ENCODE measurements at regions of chr2 and their contacts with region 1.

Region 1: DNA sequence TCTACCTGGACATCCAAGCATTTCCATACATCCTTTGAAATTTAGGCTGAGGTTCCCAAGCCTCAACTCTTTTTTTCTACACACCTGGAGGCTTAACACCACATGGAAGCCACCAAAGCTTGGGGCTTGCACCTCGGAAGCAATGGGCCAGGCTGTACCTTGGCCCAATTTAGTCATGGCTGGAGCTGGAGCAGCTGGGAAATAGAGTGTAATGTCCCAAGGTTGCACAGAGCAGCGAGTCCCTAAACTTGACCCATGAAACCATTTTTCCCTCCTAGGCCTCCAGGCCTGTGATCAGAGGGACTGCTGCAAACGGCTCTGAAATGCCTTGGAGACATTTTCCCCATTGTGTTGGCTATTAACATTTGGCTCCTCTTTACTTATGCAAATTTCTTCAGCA is 1574.3 kb upstream of the ZEB2 start:
- DNase-seq: no peak
- H3K4me3 ChIP-seq: no peak overlapping the region
- CTCF ChIP-seq: no peak
- POLR2A ChIP-seq: no peak

Region 2: GRCh38 chr2:146068051-146068450 is 26.1 kb before region 1 on chr2:
- intact Hi-C with region 1: loop called (anchors 1 kb)
- DNase-seq: no peak
- H3K4me3 ChIP-seq: no peak overlapping the region
- CTCF ChIP-seq: no peak
- POLR2A ChIP-seq: no peak